ENCODE measurements at regions of chr2 and their contacts with region 1.

Region 1: DNA sequence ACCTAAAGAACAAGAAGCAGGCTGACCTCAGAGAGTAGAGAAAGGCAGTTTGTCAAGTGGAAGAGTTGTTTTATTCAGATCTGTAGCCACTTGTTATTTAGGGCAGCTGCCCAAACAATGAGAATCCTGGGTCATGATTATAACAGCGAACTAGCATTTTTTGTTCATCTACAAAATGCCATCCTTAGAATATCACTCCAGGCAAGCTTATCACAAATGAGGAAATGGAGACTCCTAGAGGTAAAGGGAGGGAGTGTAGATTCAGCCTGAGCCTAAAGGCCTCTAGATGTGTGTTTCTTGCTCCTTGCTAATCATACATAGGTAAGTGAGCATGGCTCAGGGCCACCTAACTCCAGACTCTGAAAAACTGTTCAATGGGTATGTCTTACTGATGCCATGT is 126.1 kb downstream of the HNMT start:
- DNase-seq: no peak
- ATAC-seq: peak; percentile 67
- H3K4me3 ChIP-seq: no peak overlapping the region
- H3K27ac ChIP-seq: no peak overlapping the region
- H3K4me1 ChIP-seq: peaks cover 0 to 3% of the 10 kb centered on the region in 2 donors
- H3K27me3 ChIP-seq: no peaks in the 10 kb centered on the region

Region 2: DNA sequence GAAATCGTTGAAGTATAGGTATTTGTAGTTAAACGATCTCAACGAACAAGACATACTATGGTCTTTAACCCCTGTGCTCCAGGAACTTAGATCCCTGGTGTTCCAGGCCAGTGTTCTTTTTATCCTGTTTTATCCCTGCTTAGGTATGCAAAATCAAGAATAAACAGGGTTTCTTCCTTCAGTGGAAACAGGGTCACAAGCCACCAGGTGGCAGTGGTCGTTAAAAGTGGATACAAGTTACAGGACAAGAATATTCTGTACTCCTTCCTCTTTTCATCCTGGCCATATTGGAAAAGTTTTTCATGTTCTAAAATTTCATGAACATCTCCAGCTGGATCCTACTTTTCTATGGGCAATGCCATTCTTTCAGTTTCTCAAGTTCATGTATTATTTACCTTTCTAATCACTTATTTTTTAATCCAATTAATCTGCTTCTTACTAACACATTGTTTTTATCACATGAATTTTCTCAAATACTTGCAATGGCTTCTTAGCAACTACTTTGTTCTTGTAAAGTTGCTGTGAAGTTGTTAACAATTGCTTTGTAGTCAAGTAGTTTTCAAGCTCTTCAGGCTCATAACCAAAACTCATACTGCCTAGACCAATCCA is 142.5 kb before region 1 on chr2:
- intact Hi-C with region 1: loop called (anchors 1 to 5 kb)
- DNase-seq: peak; percentile 86 to 90
- ATAC-seq: peak; percentile 67
- H3K4me3 ChIP-seq: no peak overlapping the region
- H3K27ac ChIP-seq: no peak overlapping the region
- H3K4me1 ChIP-seq: peaks cover 0 to 3% of the 10 kb centered on the region in 2 donors
- H3K27me3 ChIP-seq: no peaks in the 10 kb centered on the region

Region 3: DNA sequence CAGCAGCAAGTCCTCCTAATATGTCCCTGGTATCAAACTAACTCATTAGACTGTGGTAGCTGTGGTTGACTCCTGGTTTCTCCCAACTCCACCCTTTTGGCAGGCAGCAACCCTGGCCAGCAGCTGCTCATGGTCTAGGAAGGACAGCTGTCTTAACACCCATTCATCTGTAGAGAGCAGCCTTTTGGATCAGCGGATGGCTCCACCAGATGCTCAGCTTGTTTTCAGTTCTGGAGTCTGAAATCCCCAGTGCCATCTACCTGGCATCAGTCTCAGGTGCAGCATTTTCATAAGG is 511.8 kb after region 1 on chr2:
- intact Hi-C with region 1: no loop called
- DNase-seq: no peak
- ATAC-seq: no peak
- H3K4me3 ChIP-seq: no peak overlapping the region
- H3K27ac ChIP-seq: no peak overlapping the region
- H3K4me1 ChIP-seq: no peaks in the 10 kb centered on the region
- H3K27me3 ChIP-seq: peaks cover 0 to 1% of the 10 kb centered on the region in 2 donors

Region 4: GRCh38 chr2:138787053-138787666 is 696.8 kb after region 1 on chr2:
- intact Hi-C with region 1: loop called in 1 of 2 experiments (anchors 5 kb)
- DNase-seq: no peak
- ATAC-seq: no peak
- H3K4me3 ChIP-seq: no peak overlapping the region
- H3K27ac ChIP-seq: no peak overlapping the region
- H3K4me1 ChIP-seq: no peaks in the 10 kb centered on the region
- H3K27me3 ChIP-seq: no peaks in the 10 kb centered on the region

Measured in aorta (tissue), 5 donors.